ENCODE measurements at regions of chr5 and their contacts with region 1.

Region 1: DNA sequence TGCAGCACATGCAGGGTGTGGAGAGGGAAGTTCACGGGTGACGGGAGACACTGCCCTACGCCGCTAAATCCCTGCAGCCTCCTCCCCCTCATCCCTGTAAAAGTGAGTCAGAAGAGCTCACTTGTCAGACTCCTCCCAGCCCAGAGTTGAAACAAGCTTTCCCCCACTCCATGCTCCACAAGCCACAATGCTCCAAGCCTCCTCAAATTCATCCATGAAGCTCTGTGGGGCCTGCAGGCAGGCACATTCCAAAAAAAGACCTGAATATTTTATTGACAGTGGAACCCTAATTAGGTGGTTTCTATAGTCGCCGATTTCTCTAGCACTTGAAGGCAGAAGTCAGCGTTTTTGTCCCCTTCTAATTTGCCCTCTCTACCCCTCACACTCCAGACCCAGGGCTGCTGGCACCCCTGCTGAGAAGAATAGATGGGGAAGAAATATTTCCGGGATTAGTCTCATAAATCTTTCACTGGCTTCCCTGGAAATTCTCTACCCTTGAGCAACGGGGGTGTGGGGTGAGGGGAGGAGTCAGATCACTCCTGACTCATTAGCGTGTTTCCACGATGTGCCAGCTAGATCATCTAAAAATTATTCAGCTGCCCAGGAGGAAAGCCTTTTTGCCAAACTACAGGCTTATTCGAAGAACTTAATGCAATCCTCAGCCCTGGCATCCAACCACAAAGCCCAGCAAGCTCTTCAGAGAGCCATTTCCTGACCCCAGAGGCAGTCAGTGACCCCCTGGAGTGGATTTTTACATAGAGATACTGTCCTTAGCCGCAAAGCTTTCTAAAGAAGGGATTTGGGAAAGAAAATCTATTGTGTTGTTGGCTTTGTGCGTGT is 97.2 kb downstream of the ENC1 start:
- DNase-seq: peak; percentile 56
- H3K4me3 Mint-ChIP-seq: peak overlapping the region; percentile 39
- H3K27ac Mint-ChIP-seq: peak overlapping the region; percentile 67
- H3K4me1 Mint-ChIP-seq: peaks cover 27% of the 10 kb centered on the region
- H3K27me3 Mint-ChIP-seq: no peaks in the 10 kb centered on the region
- CTCF ChIP-seq: no peak

Region 2: GRCh38 chr5:74519161-74519571 is 24.2 kb before region 1 on chr5:
- CTCF ChIA-PET with region 1: interaction called, 11 read pairs
- intact Hi-C with region 1: no loop called
- DNase-seq: peak; percentile 82
- H3K4me3 Mint-ChIP-seq: no peak overlapping the region
- H3K27ac Mint-ChIP-seq: peak overlapping the region; percentile 62
- H3K4me1 Mint-ChIP-seq: peaks cover 50% of the 10 kb centered on the region
- H3K27me3 Mint-ChIP-seq: no peaks in the 10 kb centered on the region
- CTCF ChIP-seq: no peak

Measured in Calu3 (cell line).